ENCODE measurements at regions of chr3 and their contacts with region 1.

Region 1: DNA sequence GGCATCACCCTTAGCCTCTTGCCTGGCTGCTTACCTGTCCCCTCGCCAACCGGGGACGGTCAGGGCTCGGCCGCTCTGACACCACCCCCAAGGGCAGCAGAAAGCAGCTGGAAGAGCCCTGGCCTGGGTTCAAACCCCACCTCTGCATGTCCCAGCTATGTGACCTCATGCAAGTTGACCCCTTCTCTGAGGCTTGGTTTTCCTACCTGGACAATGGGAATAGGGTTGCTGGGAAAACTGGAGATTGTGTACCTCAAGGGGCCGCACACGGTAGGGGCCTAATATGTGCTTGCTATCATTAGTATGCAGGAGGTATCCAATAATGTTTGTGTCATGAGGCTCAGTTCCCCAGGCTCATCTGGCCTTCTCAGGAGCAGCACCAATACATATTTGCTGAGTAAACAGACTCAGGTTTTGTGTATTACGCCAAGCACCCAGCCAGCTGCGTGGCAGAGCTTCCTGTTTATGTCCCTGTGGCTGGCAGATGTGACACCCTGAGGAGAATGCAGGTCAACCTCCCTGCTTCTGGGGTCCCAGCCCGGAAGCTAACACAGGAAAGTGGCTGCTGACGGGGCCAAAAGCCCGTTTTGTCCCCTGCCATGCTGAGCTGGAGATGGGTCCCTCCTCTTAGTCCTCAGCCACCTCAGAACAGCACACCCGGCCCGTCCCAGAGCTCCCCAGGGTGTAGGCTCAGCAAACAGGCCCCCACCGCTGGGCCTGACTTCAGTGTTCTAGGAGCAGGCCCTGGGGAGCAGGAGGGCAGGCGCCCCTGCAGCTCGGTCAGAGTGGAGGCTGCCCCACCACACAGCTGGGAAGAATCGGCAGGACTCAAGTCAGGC is 29.7 kb downstream of the PLXND1 start:
- DNase-seq: peak; percentile 85
- ATAC-seq: peak; percentile 71
- H3K4me3 ChIP-seq: peak overlapping the region in 1 of 5 experiments; percentile 40
- H3K4me3 Mint-ChIP-seq: peak overlapping the region; percentile 83
- H3K27ac ChIP-seq: peak overlapping the region; percentile 69 to 83
- H3K27ac Mint-ChIP-seq: peak overlapping the region; percentile 98
- H3K4me1 ChIP-seq: peaks cover 50 to 59% of the 10 kb centered on the region in 2 donors
- H3K4me1 Mint-ChIP-seq: peaks cover 70% of the 10 kb centered on the region
- H3K27me3 ChIP-seq: no peaks in the 10 kb centered on the region
- H3K27me3 Mint-ChIP-seq: no peaks in the 10 kb centered on the region
- CTCF ChIP-seq: no peak

Region 2: GRCh38 chr3:129120254-129121004 is 456.3 kb before region 1 on chr3:
- CTCF ChIA-PET with region 1: no interaction called
- POLR2A ChIA-PET with region 1: no interaction called
- intact Hi-C with region 1: loop called (anchors 5 kb)
- DNase-seq: peak; percentile 93
- ATAC-seq: peak; percentile 61
- H3K4me3 ChIP-seq: peak overlapping the region; percentile 68 to 81 (median 76)
- H3K4me3 Mint-ChIP-seq: peak overlapping the region; percentile 88
- H3K27ac ChIP-seq: peak overlapping the region; percentile 61 to 62
- H3K27ac Mint-ChIP-seq: peak overlapping the region; percentile 84
- H3K4me1 ChIP-seq: peaks cover 42 to 46% of the 10 kb centered on the region in 2 donors
- H3K4me1 Mint-ChIP-seq: peaks cover 53% of the 10 kb centered on the region
- H3K27me3 ChIP-seq: no peaks in the 10 kb centered on the region
- H3K27me3 Mint-ChIP-seq: no peaks in the 10 kb centered on the region
- CTCF ChIP-seq: peak; percentile 30

Region 3: DNA sequence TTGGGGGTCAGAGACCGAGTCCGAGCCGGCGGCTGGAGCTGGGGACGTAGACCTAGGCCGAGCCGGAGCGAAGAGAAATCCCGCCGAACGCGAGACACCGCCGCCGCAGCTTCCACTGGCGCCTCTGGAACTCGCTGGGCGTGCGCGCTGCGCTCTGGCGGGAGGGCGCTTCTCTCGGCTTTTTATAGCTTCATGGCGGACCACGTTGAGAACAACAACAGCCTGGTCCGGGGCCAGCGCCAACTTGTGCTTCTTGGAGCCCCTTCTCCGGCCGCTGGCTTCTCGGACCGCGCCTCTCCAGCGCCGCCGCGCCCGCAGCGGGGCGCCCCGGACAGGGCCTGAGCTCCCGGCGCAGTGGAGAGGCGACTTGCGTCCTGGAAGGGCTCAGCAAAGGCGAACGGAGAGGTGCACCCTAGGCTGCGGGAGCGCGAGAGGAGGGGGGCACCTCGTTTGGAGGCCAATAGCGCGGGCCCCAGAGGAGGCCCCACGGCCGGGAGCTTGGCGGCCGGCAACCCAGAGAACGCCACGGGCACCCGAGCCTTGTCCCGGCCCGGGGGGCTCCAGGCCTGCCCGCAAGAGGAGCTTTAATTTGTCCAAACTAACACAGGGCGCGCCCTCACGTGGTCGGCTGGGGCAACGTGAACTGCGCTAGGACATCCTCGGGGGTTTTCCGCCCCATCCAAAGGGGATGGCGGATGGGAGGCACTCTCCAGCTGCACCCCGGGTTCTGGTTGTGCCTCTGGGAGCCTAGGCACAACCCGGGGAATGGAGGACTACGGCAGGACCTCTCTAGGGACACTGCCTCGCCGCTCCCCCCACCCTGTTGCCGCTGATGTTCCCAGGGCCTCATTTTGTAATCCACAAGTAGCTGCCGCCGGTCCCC is 260.4 kb before region 1 on chr3:
- CTCF ChIA-PET with region 1: no interaction called
- POLR2A ChIA-PET with region 1: interaction called, 4 read pairs
- intact Hi-C with region 1: loop called (anchors 2 kb)
- DNase-seq: peak; percentile 88
- ATAC-seq: peak; percentile 45
- H3K4me3 ChIP-seq: peak overlapping the region; percentile 30 to 84 (median 82)
- H3K4me3 Mint-ChIP-seq: peak overlapping the region; percentile 82
- H3K27ac ChIP-seq: peak overlapping the region in 1 of 2 donors; percentile 78
- H3K27ac Mint-ChIP-seq: peak overlapping the region; percentile 87
- H3K4me1 ChIP-seq: peaks cover 26 to 40% of the 10 kb centered on the region in 2 donors
- H3K4me1 Mint-ChIP-seq: peaks cover 27% of the 10 kb centered on the region
- H3K27me3 ChIP-seq: peaks cover 0 to 30% (median 15%) of the 10 kb centered on the region in 4 experiments
- H3K27me3 Mint-ChIP-seq: peaks cover 18% of the 10 kb centered on the region
- CTCF ChIP-seq: peak; percentile 71

Region 4: GRCh38 chr3:129596194-129597086 is 19.7 kb after region 1 on chr3:
- CTCF ChIA-PET with region 1: interaction called, 11 read pairs
- POLR2A ChIA-PET with region 1: interaction called, 17 read pairs
- intact Hi-C with region 1: loop called (anchors 2 kb)
- DNase-seq: no peak
- ATAC-seq: no peak
- H3K4me3 ChIP-seq: no peak overlapping the region
- H3K4me3 Mint-ChIP-seq: no peak overlapping the region
- H3K27ac ChIP-seq: no peak overlapping the region
- H3K27ac Mint-ChIP-seq: peak overlapping the region; percentile 6
- H3K4me1 ChIP-seq: peaks cover 19 to 24% of the 10 kb centered on the region in 2 donors
- H3K4me1 Mint-ChIP-seq: peaks cover 24% of the 10 kb centered on the region
- H3K27me3 ChIP-seq: peaks cover 0 to 33% (median 11%) of the 10 kb centered on the region in 4 experiments
- H3K27me3 Mint-ChIP-seq: peaks cover 21% of the 10 kb centered on the region
- CTCF ChIP-seq: no peak

Region 5: DNA sequence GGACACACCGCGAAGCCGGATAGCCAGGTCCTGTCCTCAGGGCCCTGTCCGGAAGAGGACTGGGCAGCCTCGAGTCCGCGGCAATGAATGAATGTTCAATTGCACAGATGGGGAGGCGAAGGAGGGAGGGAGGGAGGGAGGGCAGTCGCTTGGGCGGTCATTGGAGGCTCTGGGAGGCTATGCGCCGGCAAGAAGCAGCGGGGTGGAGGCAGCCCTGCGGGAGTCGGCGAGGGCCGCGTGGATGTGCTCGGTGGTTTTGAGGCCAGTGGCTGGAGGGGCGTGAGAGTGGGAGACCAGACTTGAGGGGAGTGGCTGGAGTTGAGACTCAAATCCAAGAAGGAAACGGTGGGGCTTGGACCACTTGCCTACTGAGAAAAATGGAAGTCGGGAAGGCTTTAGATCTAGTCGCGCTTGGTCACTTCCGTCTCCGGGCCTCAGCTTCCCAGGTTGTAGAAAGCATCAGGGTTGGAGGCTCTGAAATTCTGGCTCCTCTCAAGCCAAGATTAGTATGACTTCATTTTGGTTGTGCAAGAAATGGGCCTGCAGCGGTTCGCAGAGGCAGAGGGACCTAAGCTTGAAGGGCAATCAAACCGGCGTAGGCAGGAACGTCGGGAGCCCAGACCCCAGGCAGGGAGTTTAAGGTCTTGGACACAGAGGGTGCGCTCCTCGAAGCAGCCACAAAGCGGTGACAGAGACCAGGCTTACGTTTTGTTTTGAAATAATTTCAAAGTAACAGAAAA is 50.9 kb after region 1 on chr3:
- CTCF ChIA-PET with region 1: interaction called, 9 read pairs
- POLR2A ChIA-PET with region 1: interaction called, 24 read pairs
- intact Hi-C with region 1: no loop called
- DNase-seq: peak; percentile 78
- ATAC-seq: peak; percentile 52
- H3K4me3 ChIP-seq: peak overlapping the region; percentile 49 to 86 (median 72)
- H3K4me3 Mint-ChIP-seq: peak overlapping the region; percentile 98
- H3K27ac ChIP-seq: peak overlapping the region in 1 of 2 donors; percentile 37
- H3K27ac Mint-ChIP-seq: peak overlapping the region; percentile 88
- H3K4me1 ChIP-seq: peaks cover 5 to 18% of the 10 kb centered on the region in 2 donors
- H3K4me1 Mint-ChIP-seq: peaks cover 17% of the 10 kb centered on the region
- H3K27me3 ChIP-seq: no peaks in the 10 kb centered on the region
- H3K27me3 Mint-ChIP-seq: no peaks in the 10 kb centered on the region
- CTCF ChIP-seq: peak; percentile 77